Heart left ventricle (tissue), 16 donors: ENCODE measurements at regions of chr6 and their contacts with region 1.

Region 1: GRCh38 chr6:114052141-114052540 is 81.2 kb upstream of the HDAC2 start:
- DNase-seq: no peak
- ATAC-seq: no peak
- H3K4me3 ChIP-seq: no peak overlapping the region
- H3K27ac ChIP-seq: no peak overlapping the region
- H3K4me1 ChIP-seq: no peaks in the 10 kb centered on the region
- H3K27me3 ChIP-seq: no peaks in the 10 kb centered on the region
- CTCF ChIP-seq: no peak
- POLR2A ChIP-seq: no peak

Region 2: GRCh38 chr6:114083251-114083650 is 31.1 kb after region 1 on chr6:
- intact Hi-C with region 1: loop called in 1 of 10 experiments (anchors 1 kb)
- DNase-seq: no peak
- ATAC-seq: no peak
- H3K4me3 ChIP-seq: no peak overlapping the region
- H3K27ac ChIP-seq: no peak overlapping the region
- H3K4me1 ChIP-seq: no peaks in the 10 kb centered on the region
- H3K27me3 ChIP-seq: no peaks in the 10 kb centered on the region
- CTCF ChIP-seq: no peak
- POLR2A ChIP-seq: no peak